ENCODE measurements at regions of chr5 and their contacts with region 1.

Region 1: DNA sequence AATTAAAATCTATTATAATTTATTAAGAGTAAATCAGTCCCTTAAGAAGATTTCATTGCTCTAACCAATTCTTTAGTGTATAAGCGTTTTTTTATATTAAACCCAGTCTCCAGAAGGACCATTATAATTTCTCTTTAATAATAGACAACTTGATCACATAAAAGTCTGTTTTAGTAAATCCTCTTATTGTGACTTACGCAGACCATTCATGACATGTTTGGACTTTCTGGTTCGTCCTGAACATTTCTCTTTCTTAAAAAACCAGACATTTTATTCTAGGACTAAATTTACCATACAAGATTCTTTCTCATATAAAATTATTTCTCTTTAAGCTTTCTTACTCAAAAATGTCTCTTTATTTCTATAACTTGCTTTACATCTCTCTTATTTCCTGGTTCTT is 196.2 kb upstream of the RAI14 start:
- DNase-seq: no peak
- H3K4me3 ChIP-seq: no peak overlapping the region
- H3K27ac ChIP-seq: no peak overlapping the region
- H3K4me1 ChIP-seq: no peaks in the 10 kb centered on the region
- H3K27me3 ChIP-seq: no peaks in the 10 kb centered on the region

Region 2: DNA sequence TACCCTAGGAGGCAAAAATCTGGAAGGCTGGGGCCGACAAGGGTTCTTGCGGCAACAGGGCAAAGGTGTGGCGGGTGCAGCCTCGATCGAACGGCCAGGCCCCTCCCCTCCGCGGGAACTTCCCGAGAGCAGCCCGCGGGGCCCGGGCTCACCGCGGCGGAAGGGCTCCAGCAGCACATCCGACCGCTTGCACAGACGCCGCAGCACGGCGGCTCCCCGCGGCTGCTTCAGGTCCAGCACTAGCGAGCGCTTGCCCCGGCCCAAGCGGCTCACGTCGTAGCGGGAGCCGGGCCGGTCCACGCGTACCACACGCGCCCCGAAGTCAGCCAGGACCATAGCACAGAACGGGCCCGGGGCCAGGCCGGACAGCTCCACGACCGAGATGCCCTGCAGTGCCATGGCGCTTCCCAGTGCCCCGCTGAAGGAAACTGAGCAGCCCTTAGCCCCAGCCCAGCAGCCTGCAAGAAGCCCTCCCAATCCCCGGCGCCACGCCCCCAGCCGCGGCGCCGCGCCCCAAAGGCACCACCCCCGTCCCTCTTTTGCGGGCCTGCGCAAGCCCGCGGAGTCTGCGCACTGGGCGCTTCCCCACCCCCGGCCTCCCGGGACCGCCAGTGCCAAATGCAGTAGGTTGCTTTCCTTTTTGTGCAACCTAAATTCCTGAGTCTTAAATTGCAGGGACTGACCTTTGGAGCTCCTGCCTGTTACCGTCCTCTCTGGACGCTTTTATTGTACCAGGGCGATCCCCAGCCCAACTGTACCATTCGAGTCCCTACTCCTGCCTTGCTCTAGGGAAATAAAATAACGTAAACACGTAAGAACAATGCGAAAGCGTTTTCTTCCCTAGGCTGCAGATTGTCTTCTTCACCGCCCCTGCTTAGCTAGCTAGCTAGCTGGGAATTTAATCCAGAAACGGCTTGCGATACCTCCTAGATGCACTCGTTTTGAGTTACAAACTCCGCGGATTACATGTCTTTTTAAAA is 452.0 kb before region 1 on chr5 and contains the start of gene AMACR:
- in situ Hi-C with region 1: loop called (anchors 10 kb)
- DNase-seq: peak; percentile 95
- H3K4me3 ChIP-seq: peak within 1 kb of the TSS; percentile 83
- H3K27ac ChIP-seq: peak within 1 kb of the TSS; percentile 80
- H3K4me1 ChIP-seq: peaks cover 20% of the 10 kb centered on the region
- H3K27me3 ChIP-seq: no peaks in the 10 kb centered on the region
- total RNA-seq, gene AMACR: 22.3 and 22.5 TPM in 2 replicates

Measured in GM23248 (cell line).